ENCODE measurements at regions of chr4 and their contacts with region 1.

Region 1: GRCh38 chr4:117610706-117611283 is 423.5 kb upstream of the NDST3 start:
- DNase-seq: no peak
- H3K4me3 ChIP-seq: no peak overlapping the region
- H3K27ac ChIP-seq: no peak overlapping the region
- H3K4me1 ChIP-seq: no peaks in the 10 kb centered on the region
- H3K27me3 ChIP-seq: no peaks in the 10 kb centered on the region
- CTCF ChIP-seq: no peak
- POLR2A ChIP-seq: no peak

Region 2: GRCh38 chr4:116150152-116150551 is 1460.6 kb before region 1 on chr4:
- intact Hi-C with region 1: loop called (anchors 10 kb)
- DNase-seq: no peak
- H3K4me3 ChIP-seq: no peak overlapping the region
- H3K27ac ChIP-seq: no peak overlapping the region
- H3K4me1 ChIP-seq: no peaks in the 10 kb centered on the region
- H3K27me3 ChIP-seq: no peaks in the 10 kb centered on the region
- CTCF ChIP-seq: no peak
- POLR2A ChIP-seq: no peak

Measured in breast epithelium (tissue), 4 donors.